Endothelial cell of umbilical vein (primary cell): ENCODE measurements at regions of chr16 and their contacts with region 1.

Region 1: DNA sequence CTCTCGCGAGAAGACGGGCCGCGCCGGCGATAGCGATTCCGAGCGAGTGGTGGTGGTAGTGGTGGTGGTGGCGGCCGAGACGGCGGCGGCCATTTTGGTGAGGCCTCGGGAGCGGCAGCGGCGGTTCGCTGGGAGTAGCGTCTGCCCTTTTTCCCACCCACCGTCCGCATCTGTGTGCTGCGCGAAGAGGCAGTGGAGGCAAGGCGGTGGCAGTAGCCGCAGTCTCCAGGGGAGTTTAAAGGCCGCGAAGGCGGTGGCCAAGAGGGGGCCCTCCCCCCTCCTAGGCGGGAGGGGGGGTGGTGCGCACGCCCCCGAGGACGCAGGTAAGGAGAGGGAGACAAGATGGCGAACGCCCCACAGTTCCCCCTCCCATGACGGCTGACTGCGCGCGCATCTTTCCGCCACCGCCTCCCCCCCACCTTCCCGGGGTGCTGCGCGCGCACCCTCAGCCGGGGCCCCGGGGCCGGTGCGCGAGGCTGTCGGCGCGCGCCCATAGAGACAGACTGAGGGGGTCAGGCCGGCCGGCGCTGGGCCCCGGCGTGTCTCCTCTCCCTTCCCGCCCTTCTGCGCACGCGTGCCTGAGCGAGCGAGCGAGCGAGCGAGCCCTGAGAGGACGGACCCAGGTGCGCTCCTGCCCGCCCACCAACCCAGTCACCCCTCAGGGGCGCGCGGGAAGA is 694 bp upstream of the SRCAP start:
- DNase-seq: peak; percentile 96
- H3K4me3 ChIP-seq: peak overlapping the region; percentile 49 to 99 (median 77)
- H3K27ac ChIP-seq: peak overlapping the region; percentile 94
- H3K4me1 ChIP-seq: peaks cover 26% of the 10 kb centered on the region
- H3K27me3 ChIP-seq: no peaks in the 10 kb centered on the region
- CTCF ChIP-seq: no peak
- POLR2A ChIP-seq: peak; percentile 94

Region 2: GRCh38 chr16:30526823-30527635 is 171.2 kb before region 1 on chr16:
- CTCF ChIA-PET with region 1: no interaction called
- POLR2A ChIA-PET with region 1: no interaction called
- dilution Hi-C with region 1: no loop called
- intact Hi-C with region 1: loop called (anchors 5 kb)
- DNase-seq: peak; percentile 98
- H3K4me3 ChIP-seq: peak overlapping the region; percentile 58 to 67 (median 65)
- H3K27ac ChIP-seq: peak overlapping the region; percentile 80
- H3K4me1 ChIP-seq: peaks cover 4% of the 10 kb centered on the region
- H3K27me3 ChIP-seq: no peaks in the 10 kb centered on the region
- CTCF ChIP-seq: peak; percentile 13 to 56
- POLR2A ChIP-seq: peak; percentile 58

Region 3: DNA sequence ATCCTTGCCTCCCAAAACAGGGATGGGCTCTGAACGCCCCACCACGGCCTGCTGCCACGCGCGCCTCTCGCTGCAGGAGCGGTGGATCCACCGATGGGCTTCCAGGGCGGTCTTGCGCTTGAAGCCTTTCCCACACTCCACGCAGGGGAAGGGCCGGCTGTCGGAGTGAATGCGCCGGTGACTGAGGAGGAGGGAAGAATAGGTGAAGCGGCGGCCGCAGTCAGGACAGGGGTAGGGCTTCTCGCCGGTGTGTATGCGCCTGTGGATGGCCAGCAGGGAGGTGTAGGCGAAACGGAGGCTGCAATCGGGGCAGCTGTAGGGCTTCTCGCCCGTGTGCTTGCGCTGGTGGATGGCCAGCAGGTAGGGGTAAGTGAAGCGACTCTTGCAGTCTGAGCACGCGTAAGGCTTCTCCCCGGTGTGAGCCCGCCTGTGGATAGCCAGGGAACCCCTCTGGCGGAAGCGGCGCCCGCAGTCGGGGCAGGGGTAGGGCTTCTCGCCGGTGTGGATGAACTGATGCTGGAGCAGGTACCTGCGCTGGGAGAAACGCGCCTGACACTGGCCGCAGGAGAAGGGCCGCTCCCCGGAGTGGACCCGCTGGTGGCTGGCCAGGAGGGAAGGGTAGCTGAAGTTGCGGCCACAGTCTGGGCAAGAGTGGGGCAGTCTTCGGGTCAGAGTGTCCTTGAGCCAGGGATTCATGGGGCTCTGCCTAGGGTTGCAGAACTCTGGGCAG is 115.5 kb before region 1 on chr16:
- CTCF ChIA-PET with region 1: no interaction called
- POLR2A ChIA-PET with region 1: no interaction called
- dilution Hi-C with region 1: no loop called
- intact Hi-C with region 1: no loop called
- DNase-seq: no peak
- H3K4me3 ChIP-seq: no peak overlapping the region
- H3K27ac ChIP-seq: no peak overlapping the region
- H3K4me1 ChIP-seq: peaks cover 7% of the 10 kb centered on the region
- H3K27me3 ChIP-seq: no peaks in the 10 kb centered on the region
- CTCF ChIP-seq: no peak
- POLR2A ChIP-seq: no peak

Region 4: DNA sequence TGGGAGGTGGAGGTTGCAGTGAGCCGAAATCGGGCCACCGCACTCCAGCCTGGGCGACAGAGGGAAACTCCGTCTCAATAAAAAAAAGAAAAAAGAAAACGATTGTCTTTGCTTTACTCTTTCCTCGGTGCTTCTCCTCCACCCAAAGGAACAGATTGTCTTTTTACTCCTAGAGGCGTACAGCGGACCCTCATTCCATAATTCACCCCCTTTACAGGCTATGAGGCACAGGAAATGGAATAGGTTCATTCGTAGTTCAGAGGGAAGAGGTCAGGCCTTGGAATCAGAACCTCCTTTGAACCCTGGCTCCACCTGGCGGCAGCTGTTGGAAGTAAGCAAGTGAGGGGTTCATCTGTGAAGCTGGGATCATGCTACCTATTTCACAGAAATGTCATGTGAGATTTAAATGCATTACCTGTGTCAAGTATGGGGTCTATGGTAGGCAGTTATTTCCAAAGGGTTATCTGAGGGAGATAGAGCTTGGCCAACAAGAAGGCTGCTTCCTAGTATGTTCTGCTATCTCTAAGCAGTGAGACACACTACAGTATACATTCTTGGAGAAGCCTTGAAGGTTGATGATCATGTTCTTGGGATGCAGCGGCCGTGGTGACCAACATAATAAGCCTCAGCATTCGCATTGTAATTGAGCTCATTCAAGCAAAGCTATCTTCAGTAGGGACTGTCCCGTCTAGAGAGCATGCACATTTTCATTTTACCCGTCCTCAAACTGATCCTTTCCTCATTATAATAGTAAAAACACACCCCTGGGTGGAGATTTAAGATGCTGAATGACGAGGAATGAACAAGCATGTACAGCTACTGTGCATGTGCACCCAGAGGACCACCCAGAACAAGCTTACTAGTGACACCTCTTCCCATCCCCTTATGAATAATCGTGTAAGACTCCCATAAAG is 69.4 kb before region 1 on chr16:
- CTCF ChIA-PET with region 1: interaction called, 4 read pairs
- POLR2A ChIA-PET with region 1: no interaction called
- dilution Hi-C with region 1: no loop called
- intact Hi-C with region 1: loop called (anchors 1 kb)
- DNase-seq: peak; percentile 77
- H3K4me3 ChIP-seq: peak overlapping the region in 1 of 3 experiments; percentile 27
- H3K27ac ChIP-seq: no peak overlapping the region
- H3K4me1 ChIP-seq: peaks cover 3% of the 10 kb centered on the region
- H3K27me3 ChIP-seq: peaks cover 2% of the 10 kb centered on the region in 2 experiments
- CTCF ChIP-seq: peak; percentile 85 to 91
- POLR2A ChIP-seq: no peak

Region 5: DNA sequence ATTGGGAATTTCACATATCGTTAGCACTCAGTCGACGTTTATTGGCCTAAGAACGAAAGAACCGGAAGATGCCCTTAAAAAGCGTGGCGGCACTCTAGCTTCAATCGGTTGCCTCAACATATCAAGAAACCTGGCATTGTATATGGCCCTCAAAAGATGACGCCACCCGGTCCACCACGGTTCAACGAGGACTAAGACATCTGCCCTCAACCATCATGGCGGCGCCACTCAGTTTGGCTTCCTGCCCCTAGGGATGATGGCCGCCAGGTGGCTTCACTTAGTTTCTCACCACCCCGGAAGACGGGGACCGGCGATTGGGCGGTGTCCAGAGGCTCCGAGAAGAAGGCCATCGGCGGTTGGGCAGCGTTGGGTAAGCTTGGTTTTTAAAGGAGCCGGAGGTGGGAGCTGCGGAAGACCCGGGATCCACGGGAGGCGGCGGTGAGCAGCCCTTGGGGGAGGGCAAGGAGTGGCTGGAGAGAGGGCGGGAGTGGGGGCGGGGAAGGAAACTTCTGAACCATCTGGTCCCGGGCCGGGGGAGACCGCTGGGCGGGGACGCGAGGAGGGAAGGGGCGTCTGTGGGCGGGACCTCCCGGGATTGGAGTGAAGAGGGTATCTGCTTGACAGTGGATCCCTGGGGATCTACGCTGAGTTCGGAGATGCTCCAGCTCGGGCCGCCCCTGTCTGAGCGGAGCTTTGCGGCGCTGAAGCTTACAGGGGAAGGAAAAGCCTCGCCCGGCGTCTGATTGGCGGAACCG is 47.7 kb before region 1 on chr16 and contains the start of gene PRR14:
- CTCF ChIA-PET with region 1: interaction called, 21 read pairs
- POLR2A ChIA-PET with region 1: no interaction called
- dilution Hi-C with region 1: no loop called
- intact Hi-C with region 1: loop called (anchors 2 kb)
- DNase-seq: peak; percentile 100
- H3K4me3 ChIP-seq: peak within 1 kb of the TSS; percentile 36 to 95 (median 66)
- H3K27ac ChIP-seq: peak within 1 kb of the TSS; percentile 52
- H3K4me1 ChIP-seq: peaks cover 11% of the 10 kb centered on the region
- H3K27me3 ChIP-seq: no peaks in the 10 kb centered on the region
- CTCF ChIP-seq: no peak
- POLR2A ChIP-seq: peak; percentile 25
- total RNA-seq, gene PRR14: 57.0 and 70.0 TPM in 2 replicates

Region 6: GRCh38 chr16:30715737-30716445 is 17.6 kb after region 1 on chr16:
- CTCF ChIA-PET with region 1: no interaction called
- POLR2A ChIA-PET with region 1: interaction called, 4 read pairs
- dilution Hi-C with region 1: no loop called
- intact Hi-C with region 1: loop called (anchors 1 kb)
- DNase-seq: no peak
- H3K4me3 ChIP-seq: no peak overlapping the region
- H3K27ac ChIP-seq: no peak overlapping the region
- H3K4me1 ChIP-seq: peaks cover 5% of the 10 kb centered on the region
- H3K27me3 ChIP-seq: no peaks in the 10 kb centered on the region
- CTCF ChIP-seq: no peak
- POLR2A ChIP-seq: no peak

Region 7: GRCh38 chr16:30747799-30748634 is 49.7 kb after region 1 on chr16 and contains the start of gene PHKG2:
- CTCF ChIA-PET with region 1: no interaction called
- POLR2A ChIA-PET with region 1: no interaction called
- dilution Hi-C with region 1: no loop called
- intact Hi-C with region 1: loop called (anchors 5 kb)
- DNase-seq: peak; percentile 99
- H3K4me3 ChIP-seq: peak within 1 kb of the TSS; percentile 14 to 86 (median 49)
- H3K27ac ChIP-seq: peak within 1 kb of the TSS; percentile 47
- H3K4me1 ChIP-seq: peaks cover 7% of the 10 kb centered on the region
- H3K27me3 ChIP-seq: no peaks in the 10 kb centered on the region
- CTCF ChIP-seq: no peak
- POLR2A ChIP-seq: peak; percentile 92
- total RNA-seq, gene PHKG2: 33.0 and 34.1 TPM in 2 replicates

Region 8: GRCh38 chr16:30761928-30762810 is 63.9 kb after region 1 on chr16 and contains the starts of genes CFAP119 and RNF40:
- CTCF ChIA-PET with region 1: no interaction called
- POLR2A ChIA-PET with region 1: no interaction called
- dilution Hi-C with region 1: no loop called
- intact Hi-C with region 1: no loop called
- DNase-seq: peak; percentile 99
- H3K4me3 ChIP-seq: peak within 1 kb of the TSS; percentile 19 to 87 (median 75)
- H3K27ac ChIP-seq: peak within 1 kb of the TSS; percentile 47
- H3K4me1 ChIP-seq: peaks cover 15% of the 10 kb centered on the region
- H3K27me3 ChIP-seq: no peaks in the 10 kb centered on the region
- CTCF ChIP-seq: no peak
- POLR2A ChIP-seq: peak; percentile 89
- total RNA-seq, gene CFAP119: 6.5 and 7.2 TPM in 2 replicates
- total RNA-seq, gene RNF40: 97.0 and 102 TPM in 2 replicates

Region 9: GRCh38 chr16:30896889-30897733 is 198.8 kb after region 1 on chr16:
- CTCF ChIA-PET with region 1: no interaction called
- POLR2A ChIA-PET with region 1: no interaction called
- dilution Hi-C with region 1: no loop called
- intact Hi-C with region 1: no loop called
- DNase-seq: peak; percentile 86
- H3K4me3 ChIP-seq: peak overlapping the region; percentile 24 to 44 (median 27)
- H3K27ac ChIP-seq: peak overlapping the region; percentile 69
- H3K4me1 ChIP-seq: peaks cover 17% of the 10 kb centered on the region
- H3K27me3 ChIP-seq: no peaks in the 10 kb centered on the region
- CTCF ChIP-seq: no peak
- POLR2A ChIP-seq: no peak